Head of caudate nucleus (tissue), 42 donors: ENCODE measurements at regions of chr16 and their contacts with region 1.

Region 1: GRCh38 chr16:84726079-84726668 is 26.4 kb downstream of the USP10 start:
- DNase-seq: peak; percentile 84 to 97 (median 92)

Region 2: DNA sequence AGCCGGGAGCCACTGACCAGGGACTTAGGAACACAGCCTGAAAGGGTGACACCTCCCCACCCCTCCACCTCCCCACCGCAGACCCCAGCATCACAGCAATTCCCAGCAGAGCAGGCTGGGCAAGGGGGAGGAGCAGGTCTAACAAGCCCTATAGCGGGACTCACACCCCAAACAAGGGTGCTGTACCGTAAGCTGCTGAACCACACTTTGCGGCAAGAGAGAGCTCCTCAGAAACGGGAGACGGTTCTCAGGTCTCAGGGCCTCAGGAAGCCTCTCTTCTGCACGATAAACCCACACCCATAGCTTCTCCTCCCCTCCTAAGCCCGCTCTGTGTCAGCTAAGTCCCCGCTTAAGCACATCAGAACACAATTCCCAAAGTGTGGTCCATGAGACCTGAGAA is 96.6 kb before region 1 on chr16:
- intact Hi-C with region 1: loop called (anchors 10 kb)
- DNase-seq: no peak

Region 3: DNA sequence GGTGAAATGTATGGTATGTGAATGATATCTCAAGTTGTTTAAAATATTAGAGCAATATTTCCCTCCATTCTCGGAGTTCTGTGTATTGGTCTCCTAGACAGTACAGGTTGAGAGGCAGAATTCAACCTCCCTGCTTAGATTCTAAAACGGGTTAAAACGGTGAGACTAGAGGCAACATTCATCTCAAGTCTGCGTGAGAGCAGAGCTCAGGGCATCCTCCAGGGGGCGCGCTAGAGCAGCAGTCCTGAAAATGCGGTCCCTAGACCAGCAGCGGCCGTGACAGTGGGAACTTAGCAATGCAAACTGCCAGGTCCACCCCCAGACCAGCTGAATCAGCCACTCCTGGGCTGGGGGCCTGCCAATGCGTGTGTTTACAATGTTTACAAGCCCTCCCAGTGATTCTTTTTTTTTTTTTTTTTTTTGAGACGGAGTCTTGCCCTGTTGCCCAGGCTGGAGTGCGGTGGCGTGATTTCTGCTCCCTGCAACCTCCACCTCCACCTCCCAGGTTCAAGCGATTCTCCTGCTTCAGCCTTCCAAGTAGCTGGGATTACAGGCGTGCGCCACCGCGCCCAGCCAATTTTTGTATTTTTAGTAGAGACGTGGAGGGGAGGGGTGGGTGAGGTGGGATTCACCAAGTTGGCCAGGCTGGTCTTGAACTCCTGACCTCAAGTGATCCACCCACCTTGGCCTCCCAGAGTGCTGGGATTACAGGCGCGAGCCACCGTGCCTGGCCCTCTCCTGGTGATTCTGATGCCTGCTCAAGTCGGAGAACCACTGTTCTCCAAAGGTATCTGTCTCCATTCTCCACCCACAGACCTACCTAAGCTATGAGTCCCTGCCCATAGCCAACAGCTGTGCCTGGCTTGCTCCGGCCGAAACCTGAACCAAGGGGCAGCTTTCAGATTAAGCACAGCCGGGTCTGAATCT is 53.6 kb before region 1 on chr16:
- intact Hi-C with region 1: loop called (anchors 10 kb)
- DNase-seq: peak; percentile 46 to 91 (median 78)